ENCODE measurements at regions of chr19 and their contacts with region 1.

Region 1: DNA sequence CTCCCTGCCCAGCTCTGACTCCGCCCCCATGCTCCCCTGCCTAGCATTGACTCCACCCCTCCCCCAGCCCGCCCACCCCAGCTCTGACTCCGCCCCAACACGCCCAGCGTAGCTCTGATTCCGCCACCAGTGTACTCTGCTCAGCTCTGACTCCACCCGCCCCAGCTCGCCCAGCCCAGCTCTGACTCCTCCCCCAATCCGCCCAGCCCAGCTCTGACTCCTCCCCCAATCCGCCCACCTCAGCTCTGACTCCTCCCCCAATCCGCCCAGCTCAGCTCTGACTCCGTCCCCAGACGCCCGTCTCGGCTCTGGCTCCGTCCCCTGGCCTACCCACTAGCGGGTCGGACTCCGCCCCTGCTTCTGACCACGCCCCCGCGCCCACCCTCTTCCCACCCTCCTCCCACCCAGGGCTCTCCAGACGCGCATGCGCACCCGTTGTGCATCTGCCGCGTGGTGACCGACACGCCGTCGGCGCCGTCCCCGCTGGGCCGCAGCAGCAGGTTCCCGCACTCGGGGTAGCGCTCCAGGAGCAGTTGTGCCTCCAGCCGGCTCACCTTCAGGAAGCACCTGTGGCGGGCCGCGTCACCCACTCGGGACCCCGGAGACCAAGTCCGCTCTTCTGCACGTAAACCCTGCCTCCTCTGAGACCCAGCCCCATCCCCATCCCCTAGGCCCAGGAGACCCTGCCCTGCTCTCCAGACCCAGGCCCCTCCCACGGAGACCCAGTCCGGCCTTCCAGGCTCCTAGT is 10.2 kb downstream of the STAP2 start:
- DNase-seq: peak; percentile 84 to 99 (median 97)
- ATAC-seq: peak; percentile 95
- H3K4me3 ChIP-seq: peak overlapping the region; percentile 53 to 81
- H3K4me3 Mint-ChIP-seq: peak overlapping the region; percentile 80
- H3K27ac ChIP-seq: peak overlapping the region in 1 of 2 experiments; percentile 55
- H3K27ac Mint-ChIP-seq: peak overlapping the region; percentile 92
- H3K4me1 ChIP-seq: peaks cover 20% of the 10 kb centered on the region
- H3K4me1 Mint-ChIP-seq: peaks cover 27% of the 10 kb centered on the region
- H3K27me3 ChIP-seq: no peaks in the 10 kb centered on the region
- H3K27me3 Mint-ChIP-seq: no peaks in the 10 kb centered on the region
- CTCF ChIP-seq: no peak

Region 2: DNA sequence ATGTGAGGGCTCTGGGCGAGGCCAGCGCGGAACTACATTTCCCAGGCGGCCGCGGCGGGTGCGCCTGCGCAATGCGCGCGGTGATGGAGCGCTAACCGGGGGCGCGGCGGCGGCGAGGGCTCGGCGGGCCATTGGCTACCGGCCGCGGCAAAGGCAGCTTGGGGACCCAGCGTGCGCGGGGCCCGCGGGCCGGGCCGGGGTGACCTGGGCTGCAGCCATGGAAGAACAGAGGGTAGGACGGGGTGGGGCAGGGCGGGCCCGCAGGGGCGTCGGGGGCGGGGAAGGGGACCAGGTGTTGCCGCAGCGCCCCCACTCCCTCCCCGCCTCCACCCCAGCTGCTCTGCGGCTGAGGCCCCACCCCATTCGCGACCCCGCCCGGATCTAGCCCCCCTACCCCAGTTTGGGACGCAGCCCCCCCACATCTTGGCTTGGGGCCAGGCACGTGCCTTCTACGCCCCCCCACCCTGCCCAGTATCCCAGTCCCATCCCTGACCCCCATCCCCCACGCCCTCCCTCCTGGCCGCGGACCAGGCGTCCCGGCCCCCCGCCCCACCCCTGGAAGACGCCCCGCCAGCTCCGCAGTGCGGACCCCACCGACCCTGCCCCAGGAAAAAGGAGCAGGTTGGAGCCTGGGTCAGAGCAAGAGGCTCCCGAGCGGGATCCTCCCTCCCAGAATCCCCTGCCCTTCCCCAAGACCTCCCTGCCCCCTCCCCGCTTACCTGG is 23.7 kb before region 1 on chr19 and contains the start of gene FSD1:
- CTCF ChIA-PET with region 1: no interaction called
- POLR2A ChIA-PET with region 1: interaction called, 3 read pairs
- intact Hi-C with region 1: loop called (anchors 1 to 2 kb)
- DNase-seq: peak; percentile 32 to 75 (median 61)
- ATAC-seq: peak; percentile 57
- H3K4me3 ChIP-seq: peak within 1 kb of the TSS in 1 of 2 experiments; percentile 46
- H3K4me3 Mint-ChIP-seq: peak within 1 kb of the TSS; percentile 62
- H3K27ac ChIP-seq: peak within 1 kb of the TSS in 1 of 2 experiments; percentile 22
- H3K27ac Mint-ChIP-seq: peak within 1 kb of the TSS; percentile 86
- H3K4me1 ChIP-seq: peaks cover 31% of the 10 kb centered on the region
- H3K4me1 Mint-ChIP-seq: peaks cover 29% of the 10 kb centered on the region
- H3K27me3 ChIP-seq: no peaks in the 10 kb centered on the region
- H3K27me3 Mint-ChIP-seq: no peaks in the 10 kb centered on the region
- CTCF ChIP-seq: no peak
- total RNA-seq, gene FSD1: 3.1 to 4.9 TPM

Region 3: GRCh38 chr19:4471403-4472173 is 143.2 kb after region 1 on chr19:
- CTCF ChIA-PET with region 1: no interaction called
- POLR2A ChIA-PET with region 1: no interaction called
- intact Hi-C with region 1: loop called in 1 of 2 experiments (anchors 5 kb)
- DNase-seq: peak; percentile 94 to 100 (median 97)
- ATAC-seq: peak; percentile 85
- H3K4me3 ChIP-seq: peak overlapping the region; percentile 55 to 63
- H3K4me3 Mint-ChIP-seq: no peak overlapping the region
- H3K27ac ChIP-seq: peak overlapping the region; percentile 70 to 72
- H3K27ac Mint-ChIP-seq: no peak overlapping the region
- H3K4me1 ChIP-seq: peaks cover 20% of the 10 kb centered on the region
- H3K4me1 Mint-ChIP-seq: peaks cover 22% of the 10 kb centered on the region
- H3K27me3 ChIP-seq: no peaks in the 10 kb centered on the region
- H3K27me3 Mint-ChIP-seq: no peaks in the 10 kb centered on the region
- CTCF ChIP-seq: no peak

Measured in CD8-positive, alpha-beta T cell (primary cell).